ENCODE measurements at regions of chr3 and their contacts with region 1.

Region 1: DNA sequence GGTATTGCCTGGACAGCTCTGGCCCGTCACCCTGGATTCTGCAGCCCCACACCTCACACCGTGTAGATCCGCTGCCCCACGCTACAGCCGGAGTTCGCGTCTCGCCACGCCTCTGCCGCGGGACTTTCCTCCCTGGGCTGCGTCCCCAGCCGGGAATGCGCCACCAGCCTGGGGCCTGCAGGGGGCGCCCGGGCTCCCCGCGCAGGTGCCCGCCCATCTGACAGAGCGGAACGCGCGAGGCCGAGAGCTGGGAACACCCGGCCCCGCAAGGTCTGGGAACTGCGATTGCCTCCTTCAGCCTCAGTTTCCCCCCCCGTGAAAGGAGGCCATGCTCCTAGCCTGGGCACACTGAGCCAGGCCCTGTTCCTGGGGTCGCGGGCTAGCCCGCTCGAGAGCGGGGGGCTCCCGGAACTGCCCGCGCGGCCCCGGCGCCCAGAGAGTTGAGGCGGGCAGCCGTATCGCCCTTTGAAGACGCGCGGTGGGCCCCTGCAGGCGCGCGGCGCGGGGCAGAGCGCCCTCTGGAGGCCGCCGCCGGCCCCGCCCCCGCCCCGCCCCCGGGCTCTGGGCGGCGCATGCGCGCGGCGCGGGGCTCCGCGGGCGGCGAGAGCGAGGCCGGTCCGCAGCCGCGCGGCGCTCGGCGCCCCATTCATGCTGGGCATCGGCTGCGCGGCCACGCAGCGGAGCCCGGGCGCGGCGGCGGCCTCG is at the start of gene PLXNA1:
- DNase-seq: peak; percentile 44
- ATAC-seq: peak; percentile 83
- H3K4me3 ChIP-seq: peak within 1 kb of the TSS; percentile 71
- H3K27ac ChIP-seq: peak within 1 kb of the TSS; percentile 67
- H3K4me1 ChIP-seq: peaks cover 9% of the 10 kb centered on the region
- H3K27me3 ChIP-seq: no peaks in the 10 kb centered on the region
- CTCF ChIP-seq: peak; percentile 94 to 96 (median 96)
- EP300 ChIP-seq: no peak
- POLR2A ChIP-seq: peak; percentile 69
- RAD21 ChIP-seq: peak; percentile 57
- polyA plus RNA-seq, gene PLXNA1: 0.03 to 0.15 TPM

Region 2: GRCh38 chr3:126679318-126679751 is 303.3 kb before region 1 on chr3:
- CTCF ChIA-PET with region 1: no interaction called
- POLR2A ChIA-PET with region 1: interaction called, 3 read pairs
- RAD21 ChIA-PET with region 1: no interaction called
- SMC1A ChIA-PET with region 1: no interaction called
- in situ Hi-C with region 1: no loop called
- intact Hi-C with region 1: loop called (anchors 1 kb)
- DNase-seq: peak; percentile 4
- ATAC-seq: peak; percentile 98
- H3K4me3 ChIP-seq: no peak overlapping the region
- H3K27ac ChIP-seq: no peak overlapping the region
- H3K4me1 ChIP-seq: 0 out of 2 replicates have a peak, but pooled peaks cover 3% of the 10 kb centered on the region
- H3K27me3 ChIP-seq: peaks cover 0 to 2% of the 10 kb centered on the region in 2 experiments; a peak in 2 of 4 replicates
- CTCF ChIP-seq: peak; percentile 89 to 98 (median 94)
- EP300 ChIP-seq: no peak
- POLR2A ChIP-seq: no peak
- RAD21 ChIP-seq: peak; percentile 82

Region 3: GRCh38 chr3:126911162-126912026 is 71.2 kb before region 1 on chr3:
- CTCF ChIA-PET with region 1: interaction called, 8 read pairs
- POLR2A ChIA-PET with region 1: interaction called, 5 read pairs
- RAD21 ChIA-PET with region 1: interaction called, 4 read pairs
- SMC1A ChIA-PET with region 1: interaction called, 9 read pairs
- in situ Hi-C with region 1: no loop called
- intact Hi-C with region 1: loop called (anchors 2 kb)
- DNase-seq: peak; percentile 98
- ATAC-seq: peak; percentile 97
- H3K4me3 ChIP-seq: no peak overlapping the region
- H3K27ac ChIP-seq: peak overlapping the region; percentile 95
- H3K4me1 ChIP-seq: peaks cover 52% of the 10 kb centered on the region
- H3K27me3 ChIP-seq: no peaks in the 10 kb centered on the region
- CTCF ChIP-seq: no peak
- EP300 ChIP-seq: peak; percentile 87 to 95
- POLR2A ChIP-seq: peak; percentile 56
- RAD21 ChIP-seq: no peak

Region 4: GRCh38 chr3:127015282-127016042 is 32.8 kb after region 1 on chr3:
- CTCF ChIA-PET with region 1: interaction called, 4 read pairs
- POLR2A ChIA-PET with region 1: no interaction called
- RAD21 ChIA-PET with region 1: no interaction called
- SMC1A ChIA-PET with region 1: no interaction called
- in situ Hi-C with region 1: no loop called
- intact Hi-C with region 1: loop called (anchors 1 kb)
- DNase-seq: peak; percentile 44
- ATAC-seq: peak; percentile 95
- H3K4me3 ChIP-seq: no peak overlapping the region
- H3K27ac ChIP-seq: peak overlapping the region; percentile 11; the same call in 1 of the 2 replicates
- H3K4me1 ChIP-seq: peaks cover 16% of the 10 kb centered on the region
- H3K27me3 ChIP-seq: no peaks in the 10 kb centered on the region
- CTCF ChIP-seq: no peak
- EP300 ChIP-seq: no peak
- POLR2A ChIP-seq: no peak
- RAD21 ChIP-seq: no peak

Region 5: GRCh38 chr3:127544192-127544802 is 561.7 kb after region 1 on chr3:
- CTCF ChIA-PET with region 1: no interaction called
- POLR2A ChIA-PET with region 1: no interaction called
- RAD21 ChIA-PET with region 1: no interaction called
- SMC1A ChIA-PET with region 1: no interaction called
- in situ Hi-C with region 1: no loop called
- intact Hi-C with region 1: loop called (anchors 10 kb)
- DNase-seq: no peak
- ATAC-seq: peak; percentile 88
- H3K4me3 ChIP-seq: no peak overlapping the region
- H3K27ac ChIP-seq: no peak overlapping the region
- H3K4me1 ChIP-seq: no peaks in the 10 kb centered on the region
- H3K27me3 ChIP-seq: peaks cover 0 to 1% of the 10 kb centered on the region in 2 experiments; a peak in 3 of 4 replicates
- CTCF ChIP-seq: peak; percentile 85 to 90 (median 86)
- EP300 ChIP-seq: no peak
- POLR2A ChIP-seq: no peak
- RAD21 ChIP-seq: peak; percentile 80